Activated CD4-positive, alpha-beta T cell treated with anti-CD3 and anti-CD28 coated beads for 36 hours (primary cell): ENCODE measurements at regions of chr1 and their contacts with region 1.

Region 1: DNA sequence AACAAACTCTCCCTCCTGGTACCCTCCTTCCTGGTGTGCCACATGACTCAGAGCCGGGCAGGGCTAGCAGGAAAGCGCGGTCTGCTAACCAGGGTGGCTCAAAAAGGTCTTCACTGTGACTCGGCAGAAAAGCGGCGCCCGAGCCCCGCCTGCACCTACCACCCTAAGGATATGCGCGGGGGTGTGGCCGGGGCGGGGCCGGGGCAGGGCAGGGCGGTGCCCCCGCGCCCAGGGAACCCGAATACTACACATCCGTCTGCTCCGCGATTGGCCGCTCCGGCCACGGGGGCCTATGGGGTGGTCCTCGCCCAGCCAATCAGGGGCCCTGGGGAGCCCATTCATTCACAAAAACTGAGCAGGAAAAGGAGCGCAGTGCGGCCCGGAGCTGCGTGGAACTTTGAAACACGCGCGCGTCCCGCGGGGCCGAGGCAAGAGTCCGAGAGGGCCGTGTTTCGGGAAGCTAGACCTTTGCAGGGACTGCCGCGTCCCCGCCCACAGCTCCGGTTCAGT is 1.7 kb downstream of the LRP8 start:
- DNase-seq: peak; percentile 98
- ATAC-seq: peak; percentile 89
- H3K4me3 Mint-ChIP-seq: peak overlapping the region; percentile 92
- H3K27ac Mint-ChIP-seq: peak overlapping the region; percentile 93
- H3K4me1 Mint-ChIP-seq: peaks cover 19% of the 10 kb centered on the region
- H3K27me3 Mint-ChIP-seq: no peaks in the 10 kb centered on the region

Region 2: GRCh38 chr1:52365746-52366516 is 960.2 kb before region 1 on chr1 and contains the start of gene CC2D1B:
- CTCF ChIA-PET with region 1: no interaction called
- POLR2A ChIA-PET with region 1: no interaction called
- intact Hi-C with region 1: loop called in 1 of 2 experiments (anchors 2 kb)
- DNase-seq: peak; percentile 99
- ATAC-seq: peak; percentile 94
- H3K4me3 Mint-ChIP-seq: peak within 1 kb of the TSS; percentile 94
- H3K27ac Mint-ChIP-seq: peak within 1 kb of the TSS; percentile 93
- H3K4me1 Mint-ChIP-seq: peaks cover 44% of the 10 kb centered on the region
- H3K27me3 Mint-ChIP-seq: no peaks in the 10 kb centered on the region
- total RNA-seq, gene CC2D1B: 22.6 to 25.3 TPM

Region 3: DNA sequence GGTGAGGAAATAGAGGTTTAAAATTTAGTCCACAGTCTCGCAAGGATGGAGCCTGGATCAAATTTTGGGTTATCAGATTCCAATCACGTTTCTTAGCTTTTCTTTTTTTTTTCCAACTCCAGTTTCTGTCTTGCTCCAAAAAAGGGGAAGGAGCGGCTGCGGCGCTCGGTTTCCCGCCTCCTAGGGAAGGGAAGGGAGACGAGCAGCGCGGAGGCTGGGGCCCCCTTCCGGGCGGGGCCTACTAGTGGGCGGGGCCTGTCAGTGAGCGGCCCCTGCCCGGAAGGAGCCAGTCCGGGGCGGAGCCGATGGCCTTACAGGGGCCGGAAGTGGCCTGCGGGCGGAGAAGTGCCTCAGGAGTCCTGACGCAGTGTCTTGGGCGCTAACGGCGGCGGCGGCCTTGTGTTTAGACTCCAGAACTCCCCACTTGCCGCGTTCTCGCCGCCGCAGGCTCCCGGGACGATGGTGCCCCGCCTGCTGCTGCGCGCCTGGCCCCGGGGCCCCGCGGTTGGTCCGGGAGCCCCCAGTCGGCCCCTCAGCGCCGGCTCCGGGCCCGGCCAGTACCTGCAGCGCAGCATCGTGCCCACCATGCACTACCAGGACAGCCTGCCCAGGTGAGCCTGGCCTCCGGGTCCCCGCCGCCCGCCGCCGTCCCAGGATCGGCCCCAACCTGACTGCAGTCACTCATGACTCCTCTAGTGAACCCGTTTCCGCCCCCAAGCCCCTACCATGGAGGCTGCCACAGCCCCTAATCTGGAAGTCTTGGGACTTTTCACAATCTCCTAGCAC is 129.5 kb before region 1 on chr1 and contains the start of gene CPT2:
- CTCF ChIA-PET with region 1: no interaction called
- POLR2A ChIA-PET with region 1: no interaction called
- intact Hi-C with region 1: loop called (anchors 1 to 2 kb)
- DNase-seq: peak; percentile 96
- ATAC-seq: peak; percentile 98
- H3K4me3 Mint-ChIP-seq: peak within 1 kb of the TSS; percentile 98
- H3K27ac Mint-ChIP-seq: peak within 1 kb of the TSS; percentile 99
- H3K4me1 Mint-ChIP-seq: peaks cover 25% of the 10 kb centered on the region
- H3K27me3 Mint-ChIP-seq: no peaks in the 10 kb centered on the region
- total RNA-seq, gene CPT2: 20.7 to 23.7 TPM

Region 4: DNA sequence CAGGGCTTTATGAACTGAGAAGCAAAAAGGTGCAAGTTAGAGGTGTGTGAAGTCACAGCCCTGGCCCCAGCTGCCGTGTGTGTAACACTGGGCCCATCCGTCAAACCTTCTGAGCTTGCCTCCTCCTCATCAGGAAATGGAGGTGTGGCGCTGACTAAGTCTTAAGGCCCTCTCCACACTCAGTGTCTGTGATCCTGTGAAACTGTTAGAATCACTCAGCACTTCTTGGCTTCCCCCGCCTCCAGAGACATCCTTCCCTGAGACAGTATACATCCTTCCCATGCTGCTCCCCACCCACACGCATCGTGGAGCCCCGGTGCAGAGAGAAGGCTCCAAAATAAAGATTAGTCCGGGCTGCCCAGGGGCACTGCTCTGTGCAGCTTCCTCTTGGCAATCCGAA is 31.6 kb before region 1 on chr1:
- CTCF ChIA-PET with region 1: interaction called, 3 read pairs
- POLR2A ChIA-PET with region 1: no interaction called
- intact Hi-C with region 1: loop called (anchors 1 to 5 kb)
- DNase-seq: peak; percentile 80
- ATAC-seq: peak; percentile 98
- H3K4me3 Mint-ChIP-seq: no peak overlapping the region
- H3K27ac Mint-ChIP-seq: peak overlapping the region; percentile 76
- H3K4me1 Mint-ChIP-seq: peaks cover 34% of the 10 kb centered on the region
- H3K27me3 Mint-ChIP-seq: no peaks in the 10 kb centered on the region

Region 5: DNA sequence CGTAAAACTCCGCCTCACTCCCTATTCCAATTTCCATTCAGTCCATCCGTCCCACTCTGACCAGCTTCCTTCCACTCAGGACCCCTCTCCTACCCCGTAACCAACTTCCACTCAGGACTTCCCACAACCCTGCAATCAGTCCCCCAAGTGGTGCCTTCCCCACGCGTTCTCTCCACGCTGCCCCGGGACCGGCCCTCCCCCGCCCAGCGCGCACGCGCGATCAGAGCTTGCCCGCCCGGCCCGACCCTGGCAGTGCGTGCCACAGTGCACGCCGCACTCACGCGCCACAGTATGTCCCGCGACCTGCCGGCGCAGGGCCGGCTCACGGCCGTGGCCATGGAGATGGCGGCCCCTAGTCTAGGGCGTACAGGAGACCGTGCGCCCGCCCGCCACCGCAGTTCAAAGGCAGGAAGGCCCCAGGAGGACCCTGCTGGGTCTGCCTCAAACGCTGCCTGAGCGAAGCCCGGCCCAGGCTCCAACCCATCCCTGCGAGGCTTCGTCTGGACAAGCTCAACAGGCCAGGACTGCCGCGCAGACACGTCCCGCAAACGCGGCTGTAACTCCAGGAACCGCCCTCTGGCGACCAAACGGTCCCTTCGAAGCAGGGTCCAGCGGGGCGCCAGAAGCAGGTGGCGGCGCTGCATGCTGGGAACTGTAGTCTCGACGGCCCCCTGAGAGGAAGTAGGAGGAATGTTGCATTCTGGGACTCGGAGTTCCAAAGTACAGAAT is 511.9 kb after region 1 on chr1 and contains the start of gene NDC1:
- CTCF ChIA-PET with region 1: no interaction called
- POLR2A ChIA-PET with region 1: no interaction called
- intact Hi-C with region 1: loop called in 1 of 2 experiments (anchors 2 kb)
- DNase-seq: peak; percentile 92
- ATAC-seq: peak; percentile 93
- H3K4me3 Mint-ChIP-seq: peak within 1 kb of the TSS; percentile 100
- H3K27ac Mint-ChIP-seq: peak within 1 kb of the TSS; percentile 96
- H3K4me1 Mint-ChIP-seq: peaks cover 25% of the 10 kb centered on the region
- H3K27me3 Mint-ChIP-seq: peaks cover 2% of the 10 kb centered on the region
- total RNA-seq, gene NDC1: 31.2 to 38.5 TPM

Region 6: DNA sequence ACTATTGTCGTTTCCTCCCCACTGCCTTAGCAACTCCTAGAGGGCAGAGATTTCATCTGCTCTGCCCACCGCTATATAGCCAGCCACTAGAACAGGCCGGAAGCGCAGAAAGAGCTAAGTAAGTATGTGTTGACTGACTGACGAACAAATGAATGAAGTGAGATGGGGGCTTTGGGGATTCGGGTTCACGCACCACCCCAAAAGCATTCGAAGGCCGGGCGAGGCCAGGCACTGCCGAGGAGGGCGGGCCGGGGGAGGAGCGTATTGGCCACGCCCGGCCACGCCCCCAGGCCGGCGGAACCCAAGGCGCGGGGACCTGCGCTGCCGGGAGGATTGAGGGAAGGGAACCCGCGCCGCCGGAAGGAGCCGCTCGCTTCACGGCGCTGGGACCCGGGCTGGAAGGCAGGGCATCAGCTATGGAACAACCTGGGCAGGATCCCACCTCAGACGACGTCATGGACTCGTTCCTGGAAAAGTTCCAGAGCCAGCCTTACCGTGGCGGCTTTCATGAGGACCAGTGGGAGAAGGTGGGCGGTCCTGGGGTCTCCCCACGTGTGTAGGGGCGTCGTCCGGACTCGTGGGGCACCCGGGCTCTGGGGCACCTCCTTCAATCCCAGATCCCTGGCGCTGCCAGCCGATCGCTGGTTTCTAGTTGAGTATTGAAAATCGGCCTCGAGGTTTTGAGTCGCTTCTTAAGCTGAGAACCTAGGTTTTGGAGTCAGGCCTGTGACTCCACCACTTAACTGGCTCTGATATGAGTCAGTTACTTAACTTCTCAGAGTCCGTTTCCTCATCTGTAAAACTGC is 1389.6 kb after region 1 on chr1 and contains the start of gene TTC4:
- CTCF ChIA-PET with region 1: no interaction called
- POLR2A ChIA-PET with region 1: no interaction called
- intact Hi-C with region 1: loop called in 1 of 2 experiments (anchors 2 kb)
- DNase-seq: peak; percentile 91
- ATAC-seq: peak; percentile 92
- H3K4me3 Mint-ChIP-seq: peak within 1 kb of the TSS; percentile 85
- H3K27ac Mint-ChIP-seq: peak within 1 kb of the TSS; percentile 92
- H3K4me1 Mint-ChIP-seq: peaks cover 29% of the 10 kb centered on the region
- H3K27me3 Mint-ChIP-seq: no peaks in the 10 kb centered on the region
- total RNA-seq, gene TTC4: 34.4 to 36.1 TPM